Colonic mucosa (tissue), 4 donors: ENCODE measurements at regions of chr1 and their contacts with region 1.

Region 1: DNA sequence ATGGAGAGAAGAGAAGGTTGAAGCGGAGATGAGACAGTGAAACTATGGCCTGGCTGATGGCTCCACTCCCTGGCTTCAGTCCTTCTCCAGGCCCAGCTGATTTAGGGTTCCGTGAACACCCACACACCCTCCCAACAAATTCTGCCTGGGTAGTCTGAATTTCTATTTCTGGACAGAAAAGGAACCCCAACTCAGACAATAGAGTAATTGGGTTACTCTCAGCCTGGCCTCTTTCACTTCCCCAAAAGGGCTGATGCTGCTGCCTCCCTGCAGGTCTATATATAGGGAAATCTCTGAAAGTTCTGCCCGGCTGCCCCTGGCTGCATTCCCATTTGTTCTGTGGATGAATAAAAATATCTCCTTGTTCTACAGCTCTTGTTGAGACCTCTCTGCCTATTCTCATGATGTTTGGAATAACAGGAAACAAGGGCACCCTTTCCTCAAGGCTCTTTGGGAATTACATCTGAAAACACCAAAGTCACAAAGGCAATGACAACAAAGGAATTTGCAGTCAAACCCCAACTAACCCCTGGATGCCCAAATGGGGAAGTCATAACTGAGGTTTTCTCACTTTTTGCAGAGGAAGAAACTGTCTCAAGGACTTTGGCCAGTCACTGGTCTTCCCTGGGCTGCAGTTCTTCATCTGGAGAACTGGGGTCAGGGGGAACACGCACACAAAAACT is 11.4 kb upstream of the ZSCAN20 start:
- DNase-seq: no peak
- H3K4me3 ChIP-seq: no peak overlapping the region
- H3K27ac ChIP-seq: no peak overlapping the region
- H3K4me1 ChIP-seq: no peaks in the 10 kb centered on the region
- H3K27me3 ChIP-seq: no peaks in the 10 kb centered on the region
- CTCF ChIP-seq: no peak

Region 2: GRCh38 chr1:33286451-33287185 is 174.5 kb before region 1 on chr1:
- intact Hi-C with region 1: no loop called
- DNase-seq: no peak
- H3K4me3 ChIP-seq: no peak overlapping the region
- H3K27ac ChIP-seq: no peak overlapping the region
- H3K4me1 ChIP-seq: no peaks in the 10 kb centered on the region
- H3K27me3 ChIP-seq: no peaks in the 10 kb centered on the region
- CTCF ChIP-seq: no peak

Region 3: GRCh38 chr1:33378976-33379375 is 82.1 kb before region 1 on chr1:
- intact Hi-C with region 1: loop called (anchors 5 kb)
- DNase-seq: no peak
- H3K4me3 ChIP-seq: no peak overlapping the region
- H3K27ac ChIP-seq: no peak overlapping the region
- H3K4me1 ChIP-seq: no peaks in the 10 kb centered on the region
- H3K27me3 ChIP-seq: no peaks in the 10 kb centered on the region
- CTCF ChIP-seq: no peak

Region 4: GRCh38 chr1:33410091-33410701 is 50.9 kb before region 1 on chr1:
- intact Hi-C with region 1: no loop called
- DNase-seq: no peak
- H3K4me3 ChIP-seq: no peak overlapping the region
- H3K27ac ChIP-seq: no peak overlapping the region
- H3K4me1 ChIP-seq: no peaks in the 10 kb centered on the region
- H3K27me3 ChIP-seq: no peaks in the 10 kb centered on the region
- CTCF ChIP-seq: no peak

Region 5: DNA sequence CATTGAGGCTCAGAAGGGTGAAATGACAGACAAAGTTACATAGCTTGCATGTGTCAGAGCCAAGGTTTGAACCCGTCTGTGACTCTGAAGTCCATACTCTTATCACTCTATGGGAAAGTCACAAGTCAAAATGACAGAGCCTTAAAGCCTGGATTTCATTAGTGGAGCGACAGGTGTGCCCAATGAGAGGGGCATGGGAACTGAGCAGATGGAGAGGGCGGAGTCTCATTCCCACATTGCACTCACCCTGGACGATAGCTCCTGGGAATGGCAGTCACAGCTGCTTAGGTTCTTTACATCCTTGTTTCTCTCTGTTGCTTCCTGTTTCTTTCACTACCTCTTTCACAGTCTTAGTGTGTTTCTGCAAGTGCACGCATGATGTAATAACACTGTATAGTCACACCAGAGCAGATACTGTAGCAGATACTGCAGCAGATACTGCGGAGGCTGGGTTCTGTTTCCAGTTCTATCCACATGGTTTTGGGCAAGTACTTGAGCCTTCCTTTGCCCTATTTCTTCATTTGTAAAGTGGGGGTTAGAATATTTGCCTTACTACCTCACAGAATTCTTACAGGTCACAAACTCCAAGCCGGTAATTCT is 138.5 kb after region 1 on chr1:
- intact Hi-C with region 1: no loop called
- DNase-seq: no peak
- H3K4me3 ChIP-seq: no peak overlapping the region
- H3K27ac ChIP-seq: no peak overlapping the region
- H3K4me1 ChIP-seq: no peaks in the 10 kb centered on the region
- H3K27me3 ChIP-seq: no peaks in the 10 kb centered on the region
- CTCF ChIP-seq: no peak